ENCODE measurements at regions of chr18 and their contacts with region 1.

Region 1: DNA sequence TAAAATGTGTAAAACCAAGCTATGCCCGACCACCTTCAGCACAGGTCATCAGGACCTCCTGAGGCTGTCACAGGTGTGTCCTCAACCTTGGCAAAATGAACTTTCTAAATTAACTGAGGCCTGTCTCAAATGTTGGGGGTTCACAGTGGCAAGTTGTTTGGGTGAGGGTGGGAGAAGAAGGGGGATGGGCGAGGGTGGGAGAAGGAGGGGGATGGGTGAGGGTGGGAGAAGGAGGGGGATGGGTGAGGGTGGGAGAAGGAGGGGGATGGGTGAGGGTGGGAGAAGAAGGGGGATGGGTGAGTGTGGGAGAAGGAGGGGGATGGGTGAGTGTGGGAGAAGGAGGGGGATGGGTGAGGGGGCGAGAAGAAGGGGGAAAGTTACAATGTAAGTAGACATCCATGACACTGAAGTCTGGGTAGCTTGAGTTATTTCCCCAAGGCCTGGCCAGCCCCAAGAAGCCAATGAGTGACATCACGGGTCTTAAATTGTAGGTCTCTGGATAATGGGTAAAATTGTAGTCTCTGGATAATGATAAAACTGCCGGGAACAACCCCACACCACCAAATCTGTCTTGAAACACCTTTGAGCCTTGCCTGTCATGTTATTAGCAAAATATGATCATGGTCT is 56.3 kb downstream of the TIMM21 start:
- DNase-seq: no peak
- H3K4me3 ChIP-seq: no peak overlapping the region
- H3K27ac ChIP-seq: no peak overlapping the region
- H3K4me1 ChIP-seq: no peaks in the 10 kb centered on the region
- H3K27me3 ChIP-seq: no peaks in the 10 kb centered on the region
- CTCF ChIP-seq: no peak

Region 2: GRCh38 chr18:73199151-73199550 is 1005.5 kb before region 1 on chr18:
- CTCF ChIA-PET with region 1: no interaction called
- dilution Hi-C with region 1: no loop called
- in situ Hi-C with region 1: no loop called
- intact Hi-C with region 1: no loop called
- DNase-seq: peak; percentile 40
- H3K4me3 ChIP-seq: no peak overlapping the region
- H3K27ac ChIP-seq: no peak overlapping the region
- H3K4me1 ChIP-seq: no peaks in the 10 kb centered on the region
- H3K27me3 ChIP-seq: no peaks in the 10 kb centered on the region
- CTCF ChIP-seq: no peak

Region 3: DNA sequence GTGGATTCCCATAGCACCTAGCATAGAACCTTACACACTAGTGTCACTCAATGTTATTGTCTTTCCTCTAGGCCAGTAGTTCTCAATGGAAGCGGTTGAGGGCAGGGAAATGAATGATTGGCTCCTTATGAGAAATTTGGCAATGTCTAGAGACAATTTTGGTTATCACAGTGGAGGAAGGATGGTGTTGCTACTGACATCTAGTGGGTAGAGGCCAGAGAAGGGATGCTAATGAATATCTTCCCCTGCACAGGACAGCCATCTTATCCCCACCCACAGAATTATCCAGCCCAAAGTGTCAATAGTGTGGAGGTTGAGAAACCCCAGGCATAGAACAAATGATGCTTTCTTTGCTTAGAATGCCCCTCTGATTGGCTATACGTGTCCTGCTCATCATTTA is 126.8 kb after region 1 on chr18:
- CTCF ChIA-PET with region 1: no interaction called
- dilution Hi-C with region 1: no loop called
- in situ Hi-C with region 1: loop called in 1 of 2 experiments (anchors 10 kb)
- intact Hi-C with region 1: no loop called
- DNase-seq: peak; percentile 32
- H3K4me3 ChIP-seq: no peak overlapping the region
- H3K27ac ChIP-seq: no peak overlapping the region
- H3K4me1 ChIP-seq: no peaks in the 10 kb centered on the region
- H3K27me3 ChIP-seq: no peaks in the 10 kb centered on the region
- CTCF ChIP-seq: peak; percentile 49 to 68

Region 4: DNA sequence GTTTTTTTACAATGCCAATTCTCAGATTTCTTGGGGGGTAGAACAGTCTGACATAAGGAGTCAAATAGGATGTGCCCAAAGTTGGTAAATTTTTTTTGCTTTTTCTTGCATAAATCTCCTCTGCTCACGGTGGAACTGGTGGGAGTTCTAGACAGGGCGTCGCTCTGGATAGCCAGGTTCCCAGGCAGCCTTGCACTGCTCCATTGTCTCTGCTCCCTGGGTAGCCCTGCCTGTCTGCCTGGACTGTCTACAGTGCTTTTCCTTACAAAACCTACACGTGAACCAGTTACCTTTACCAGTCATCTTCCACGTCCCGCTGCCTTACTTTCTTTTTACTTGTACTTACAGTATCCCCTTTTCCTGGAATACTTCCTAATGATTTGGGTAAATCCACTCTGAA is 510.2 kb after region 1 on chr18:
- CTCF ChIA-PET with region 1: no interaction called
- dilution Hi-C with region 1: no loop called
- in situ Hi-C with region 1: no loop called
- intact Hi-C with region 1: no loop called
- DNase-seq: no peak
- H3K4me3 ChIP-seq: no peak overlapping the region
- H3K27ac ChIP-seq: no peak overlapping the region
- H3K4me1 ChIP-seq: no peaks in the 10 kb centered on the region
- H3K27me3 ChIP-seq: no peaks in the 10 kb centered on the region
- CTCF ChIP-seq: no peak

Measured in mammary epithelial cell (primary cell).